Panc1 (cell line): ENCODE measurements at regions of chr7 and their contacts with region 1.

Region 1: GRCh38 chr7:74026903-74027551 is 946 bp upstream of the ELN start:
- DNase-seq: peak; percentile 45
- ATAC-seq: peak; percentile 83
- H3K4me3 ChIP-seq: no peak overlapping the region
- H3K27ac ChIP-seq: no peak overlapping the region
- H3K4me1 ChIP-seq: peaks cover 23% of the 10 kb centered on the region
- H3K27me3 ChIP-seq: no peaks in the 10 kb centered on the region
- CTCF ChIP-seq: peak; percentile 98

Region 2: DNA sequence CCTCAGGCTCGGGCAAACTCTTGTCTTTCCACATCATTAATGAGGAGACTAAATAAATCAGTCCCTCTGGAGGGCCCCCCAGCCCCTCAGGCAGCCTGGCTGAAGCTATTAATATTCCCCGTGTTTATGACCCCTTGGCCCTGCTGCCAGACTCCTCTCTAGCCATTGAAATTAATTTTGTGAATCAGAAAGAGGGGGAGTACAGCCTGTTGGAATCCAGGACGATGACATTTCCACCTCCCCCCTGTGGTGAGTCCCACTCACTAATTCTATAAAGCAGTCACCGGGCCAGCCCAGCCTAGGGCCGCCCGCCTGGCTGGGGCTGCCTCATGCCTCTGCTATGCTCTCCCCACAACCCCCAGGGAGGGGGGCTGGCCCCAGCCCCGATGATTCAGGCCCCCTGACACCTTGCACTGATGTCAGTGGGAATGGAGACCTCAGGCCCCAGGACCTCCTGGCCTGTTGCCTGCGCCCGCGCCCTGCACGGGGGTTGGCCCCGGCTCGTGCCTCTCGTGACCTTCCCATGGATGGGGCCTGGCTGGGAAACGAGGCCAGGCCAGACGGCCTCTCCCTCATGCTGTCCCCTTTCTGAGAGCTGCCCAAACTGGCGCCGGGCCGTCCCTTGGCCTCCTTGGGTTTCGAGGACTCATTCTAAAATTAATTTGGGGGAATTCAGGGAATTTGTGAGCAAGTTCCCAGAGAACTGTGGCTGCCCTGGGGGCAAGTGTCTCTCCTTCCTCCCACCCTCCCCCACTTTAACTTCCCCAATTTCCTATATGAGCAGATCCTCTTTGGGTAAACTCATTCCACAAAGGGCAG is 132.1 kb before region 1 on chr7:
- CTCF ChIA-PET with region 1: interaction called, 4 read pairs
- POLR2A ChIA-PET with region 1: interaction called, 4 read pairs
- in situ Hi-C with region 1: no loop called
- intact Hi-C with region 1: loop called (anchors 10 kb)
- DNase-seq: no peak
- ATAC-seq: peak; percentile 65
- H3K4me3 ChIP-seq: no peak overlapping the region
- H3K27ac ChIP-seq: no peak overlapping the region
- H3K4me1 ChIP-seq: no peaks in the 10 kb centered on the region
- H3K27me3 ChIP-seq: no peaks in the 10 kb centered on the region
- CTCF ChIP-seq: no peak

Region 3: GRCh38 chr7:74002474-74003017 is 24.5 kb before region 1 on chr7:
- CTCF ChIA-PET with region 1: interaction called, 3 read pairs
- POLR2A ChIA-PET with region 1: interaction called, 14 read pairs
- in situ Hi-C with region 1: no loop called
- intact Hi-C with region 1: no loop called
- DNase-seq: no peak
- ATAC-seq: peak; percentile 76
- H3K4me3 ChIP-seq: no peak overlapping the region; a peak in 1 of 4 replicates
- H3K27ac ChIP-seq: no peak overlapping the region
- H3K4me1 ChIP-seq: no peaks in the 10 kb centered on the region
- H3K27me3 ChIP-seq: no peaks in the 10 kb centered on the region
- CTCF ChIP-seq: no peak

Region 4: DNA sequence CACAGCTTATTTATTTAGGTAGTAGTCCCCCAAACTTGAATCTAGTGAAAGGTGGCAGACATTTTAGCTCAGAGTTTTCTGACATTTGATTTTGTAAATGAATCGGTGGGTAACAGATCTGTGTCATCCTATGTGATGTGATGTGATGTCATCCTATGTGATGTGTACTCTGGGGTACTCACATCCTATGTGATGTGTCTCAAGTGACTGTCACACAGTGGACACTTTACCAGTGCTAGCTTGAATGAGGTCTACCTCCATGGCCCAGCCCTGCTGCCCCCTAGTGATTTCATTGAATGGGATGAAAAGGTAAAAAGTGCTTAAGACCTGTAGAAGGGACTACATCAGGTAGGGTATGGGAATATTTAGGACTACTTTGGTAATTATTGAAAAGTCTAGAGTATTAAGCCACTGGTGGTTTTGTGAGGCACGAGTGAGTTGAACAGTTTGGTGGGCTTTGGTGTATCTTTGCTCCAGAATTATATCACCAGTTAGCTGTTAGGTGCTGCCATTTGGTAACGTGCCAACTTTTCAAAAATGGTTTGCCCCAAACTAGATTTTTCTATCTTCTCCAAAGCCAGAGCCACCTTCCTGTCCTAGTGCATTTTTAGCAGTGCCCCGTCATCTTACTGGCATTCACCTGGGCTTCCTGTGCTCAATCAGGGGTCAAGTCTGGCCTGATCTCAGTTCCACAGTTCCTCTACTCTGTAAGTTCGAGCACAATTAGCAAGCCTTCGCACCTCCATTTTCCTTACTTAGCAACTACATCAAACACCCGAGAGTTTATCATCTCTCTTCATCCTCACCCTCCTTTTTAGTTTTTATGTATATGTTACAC is 156.8 kb after region 1 on chr7:
- CTCF ChIA-PET with region 1: no interaction called
- POLR2A ChIA-PET with region 1: no interaction called
- in situ Hi-C with region 1: no loop called
- intact Hi-C with region 1: no loop called
- DNase-seq: no peak
- ATAC-seq: peak; percentile 64
- H3K4me3 ChIP-seq: no peak overlapping the region
- H3K27ac ChIP-seq: no peak overlapping the region
- H3K4me1 ChIP-seq: peaks cover 35% of the 10 kb centered on the region
- H3K27me3 ChIP-seq: no peaks in the 10 kb centered on the region
- CTCF ChIP-seq: peak; percentile 77